Endothelial cell of umbilical vein (primary cell): ENCODE measurements at regions of chr19 and their contacts with region 1.

Region 1: DNA sequence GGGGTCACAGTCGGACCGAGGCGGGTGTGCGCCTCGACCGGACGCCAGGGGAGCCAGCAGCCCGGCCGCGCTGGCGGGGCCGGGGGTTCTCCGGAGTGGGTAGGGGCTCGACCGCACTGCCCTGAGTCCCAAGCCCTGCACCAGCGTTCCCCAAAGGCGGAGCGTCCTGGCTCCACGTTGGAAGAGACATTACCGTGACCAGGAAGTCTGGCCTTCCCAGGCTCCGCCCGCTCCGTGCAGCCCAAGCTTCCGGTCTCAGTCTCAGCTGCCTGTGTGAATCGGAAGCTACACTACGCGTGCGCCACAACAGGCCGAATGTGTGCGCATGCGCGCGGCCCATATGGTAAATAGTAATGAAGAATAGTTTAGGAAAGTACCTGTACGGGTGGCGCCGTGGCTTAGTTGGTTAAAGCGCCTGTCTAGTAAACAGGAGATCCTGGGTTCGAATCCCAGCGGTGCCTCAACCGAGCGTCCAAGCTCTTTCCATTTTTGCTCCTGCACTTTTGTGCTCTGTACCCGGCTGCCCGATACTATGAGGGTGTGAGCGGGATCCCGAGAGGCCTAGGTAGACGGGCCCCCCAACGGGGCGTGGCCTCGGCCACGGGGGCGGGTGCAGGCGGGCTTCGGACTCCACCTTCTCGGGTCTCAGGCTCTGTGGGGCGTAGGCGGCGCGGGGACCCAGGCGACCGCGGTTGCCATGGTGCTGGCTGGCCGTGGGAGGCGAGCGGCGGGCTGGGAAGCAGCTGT is 17.3 kb upstream of the LRP3 start:
- DNase-seq: peak; percentile 100
- H3K4me3 ChIP-seq: peak overlapping the region; percentile 55 to 86 (median 63)
- H3K27ac ChIP-seq: peak overlapping the region; percentile 62
- H3K4me1 ChIP-seq: peaks cover 15% of the 10 kb centered on the region
- H3K27me3 ChIP-seq: peaks cover 0 to 7% of the 10 kb centered on the region in 2 experiments
- CTCF ChIP-seq: peak in 1 of 2 donors; percentile 32
- POLR2A ChIP-seq: peak; percentile 94

Region 2: DNA sequence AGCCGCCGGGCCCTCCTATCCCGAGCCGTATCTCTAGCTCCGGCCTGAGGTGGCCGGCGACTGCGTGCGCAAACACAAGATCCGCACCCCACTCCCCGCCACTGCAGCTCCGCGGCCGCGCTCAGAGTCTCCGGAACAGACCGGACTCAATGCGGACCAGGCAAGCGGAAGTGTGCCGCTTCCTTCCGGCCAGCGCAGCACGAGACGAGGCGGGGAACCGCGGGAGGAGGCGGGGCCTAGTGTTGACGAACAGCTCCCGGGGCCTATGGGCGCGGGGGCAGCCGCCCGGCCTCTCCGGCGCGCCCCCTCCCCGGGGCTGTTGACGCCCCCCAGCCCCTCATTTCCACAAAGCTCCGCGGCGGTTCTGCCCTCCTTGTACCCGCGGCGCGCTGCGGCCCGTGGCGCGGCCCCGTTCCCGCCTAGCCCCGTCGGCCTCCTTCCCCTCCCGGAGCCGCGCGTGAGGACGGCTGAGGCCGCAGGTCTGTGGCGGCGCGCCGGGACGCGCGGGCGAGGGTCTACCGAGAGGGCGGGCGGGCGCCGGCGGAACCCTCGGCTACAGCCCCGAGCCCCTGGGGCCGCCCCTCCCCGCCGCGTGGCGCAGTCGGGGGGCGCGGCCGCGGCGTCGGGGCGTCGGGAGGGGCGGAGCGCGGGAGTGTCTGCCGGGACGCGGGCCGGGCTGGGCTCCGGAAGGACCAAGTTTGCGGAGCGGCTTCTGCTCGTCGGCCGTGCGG is 771.2 kb before region 1 on chr19 and contains the start of gene DPY19L3:
- CTCF ChIA-PET with region 1: no interaction called
- POLR2A ChIA-PET with region 1: no interaction called
- dilution Hi-C with region 1: no loop called
- intact Hi-C with region 1: loop called (anchors 1 kb)
- DNase-seq: peak; percentile 93
- H3K4me3 ChIP-seq: peak within 1 kb of the TSS; percentile 43 to 97 (median 72)
- H3K27ac ChIP-seq: peak within 1 kb of the TSS; percentile 95
- H3K4me1 ChIP-seq: peaks cover 8% of the 10 kb centered on the region
- H3K27me3 ChIP-seq: no peaks in the 10 kb centered on the region
- CTCF ChIP-seq: no peak
- POLR2A ChIP-seq: peak; percentile 98
- total RNA-seq, gene DPY19L3: 39.3 and 39.5 TPM in 2 replicates

Region 3: GRCh38 chr19:33125929-33126388 is 50.9 kb before region 1 on chr19:
- CTCF ChIA-PET with region 1: interaction called, 8 read pairs
- POLR2A ChIA-PET with region 1: no interaction called
- dilution Hi-C with region 1: no loop called
- intact Hi-C with region 1: loop called (anchors 2 kb)
- DNase-seq: peak; percentile 73
- H3K4me3 ChIP-seq: no peak overlapping the region
- H3K27ac ChIP-seq: no peak overlapping the region
- H3K4me1 ChIP-seq: no peaks in the 10 kb centered on the region
- H3K27me3 ChIP-seq: no peaks in the 10 kb centered on the region
- CTCF ChIP-seq: peak; percentile 83 to 87
- POLR2A ChIP-seq: no peak

Region 4: GRCh38 chr19:33193865-33194362 is 17.1 kb after region 1 on chr19 and contains the start of gene LRP3:
- CTCF ChIA-PET with region 1: interaction called, 6 read pairs
- POLR2A ChIA-PET with region 1: no interaction called
- dilution Hi-C with region 1: no loop called
- intact Hi-C with region 1: loop called (anchors 2 kb)
- DNase-seq: peak; percentile 13
- H3K4me3 ChIP-seq: peak within 1 kb of the TSS; percentile 19 to 51 (median 39)
- H3K27ac ChIP-seq: no peak within 1 kb of the TSS
- H3K4me1 ChIP-seq: peaks cover 3% of the 10 kb centered on the region
- H3K27me3 ChIP-seq: peaks cover 2 to 4% of the 10 kb centered on the region in 2 experiments
- CTCF ChIP-seq: no peak
- POLR2A ChIP-seq: no peak
- total RNA-seq, gene LRP3: 17.8 and 19.4 TPM in 2 replicates

Region 5: DNA sequence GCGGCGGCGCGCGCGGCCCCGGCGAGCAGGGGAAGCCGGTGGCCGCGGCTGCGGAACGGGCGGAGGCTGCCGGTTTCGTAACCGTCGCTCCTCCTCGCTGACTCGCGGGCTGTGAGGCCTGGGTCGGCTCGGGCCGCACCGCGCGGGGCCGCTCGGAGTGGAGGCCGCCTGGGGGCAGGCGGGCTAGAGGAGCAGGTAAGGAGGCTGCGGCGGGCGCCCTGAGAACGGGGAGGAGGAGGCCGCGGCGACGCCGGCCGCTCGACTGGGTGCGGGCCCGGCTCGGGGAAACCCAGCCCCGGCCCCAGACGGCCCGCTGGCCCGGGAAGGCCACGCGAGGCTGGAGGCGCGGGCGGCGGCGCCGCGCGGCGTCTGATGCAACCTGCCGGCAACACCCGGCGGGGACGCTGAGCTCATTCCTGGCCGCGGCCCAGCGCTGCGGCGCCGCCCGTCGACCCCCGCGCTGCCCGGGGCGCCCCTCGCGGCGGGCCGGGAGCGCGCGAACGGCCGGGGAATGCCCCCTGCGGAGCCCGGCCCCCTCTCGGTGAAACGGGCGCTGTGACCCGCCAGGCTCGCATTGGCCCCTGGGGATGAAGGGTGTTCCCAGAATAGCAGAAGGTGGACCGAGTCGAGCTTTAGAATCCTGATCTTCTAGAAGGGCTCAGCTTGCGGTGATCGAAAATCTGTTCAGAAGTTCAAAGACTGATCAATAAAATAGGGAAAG is 197.0 kb after region 1 on chr19 and contains the start of gene CEBPG:
- CTCF ChIA-PET with region 1: no interaction called
- POLR2A ChIA-PET with region 1: interaction called, 7 read pairs
- dilution Hi-C with region 1: no loop called
- intact Hi-C with region 1: loop called (anchors 5 kb)
- DNase-seq: peak; percentile 54
- H3K4me3 ChIP-seq: peak within 1 kb of the TSS; percentile 81 to 97 (median 94)
- H3K27ac ChIP-seq: peak within 1 kb of the TSS; percentile 96
- H3K4me1 ChIP-seq: peaks cover 46% of the 10 kb centered on the region
- H3K27me3 ChIP-seq: peaks cover 0 to 1% of the 10 kb centered on the region in 2 experiments
- CTCF ChIP-seq: peak; percentile 23 to 26
- POLR2A ChIP-seq: no peak
- total RNA-seq, gene CEBPG: 24.3 and 24.6 TPM in 2 replicates